Right ventricle myocardium inferior (tissue), 1 donor: ENCODE measurements at regions of chr12 and their contacts with region 1.

Region 1: DNA sequence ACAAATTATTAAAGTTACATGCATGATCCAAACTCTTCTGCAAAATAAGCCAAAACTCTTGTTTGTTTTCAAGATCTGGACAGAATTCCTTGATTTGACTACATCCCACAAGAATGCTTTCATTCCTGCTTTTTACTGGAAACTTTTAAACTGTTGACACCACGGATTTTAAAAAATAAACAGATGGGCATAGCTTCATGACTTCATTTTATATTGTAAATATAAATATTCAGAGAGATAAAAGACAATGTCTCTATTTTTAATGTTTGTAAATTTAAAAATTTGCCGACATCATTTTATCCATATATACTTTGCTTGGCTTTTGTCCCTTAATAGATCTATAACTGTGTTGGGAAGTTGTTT is 134.3 kb upstream of the DCN start:
- DNase-seq: no peak
- ATAC-seq: peak; percentile 23

Region 2: DNA sequence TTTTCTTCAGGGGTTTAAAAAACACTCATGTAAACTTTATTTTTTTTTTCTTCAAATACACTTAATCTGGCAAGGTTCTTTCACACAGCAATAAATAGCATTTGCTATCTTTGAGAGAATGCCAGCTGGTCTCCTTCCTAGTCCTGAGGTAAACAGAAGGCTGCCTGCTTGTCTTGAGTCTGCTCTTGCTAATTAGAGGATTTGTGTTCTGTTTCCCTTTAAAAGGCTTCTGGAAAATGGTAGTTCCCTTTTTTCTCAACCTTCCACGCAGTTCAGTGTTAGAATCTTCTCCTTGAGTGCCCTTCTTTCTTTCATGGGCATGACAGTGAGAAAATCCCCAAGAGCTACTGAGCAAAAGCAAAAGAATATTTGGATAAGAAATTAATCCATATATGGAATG is 42.0 kb before region 1 on chr12:
- intact Hi-C with region 1: loop called (anchors 5 kb)
- DNase-seq: no peak
- ATAC-seq: peak; percentile 45